Left colon (tissue), 2 donors: ENCODE measurements at regions of chr2 and their contacts with region 1.

Region 1: DNA sequence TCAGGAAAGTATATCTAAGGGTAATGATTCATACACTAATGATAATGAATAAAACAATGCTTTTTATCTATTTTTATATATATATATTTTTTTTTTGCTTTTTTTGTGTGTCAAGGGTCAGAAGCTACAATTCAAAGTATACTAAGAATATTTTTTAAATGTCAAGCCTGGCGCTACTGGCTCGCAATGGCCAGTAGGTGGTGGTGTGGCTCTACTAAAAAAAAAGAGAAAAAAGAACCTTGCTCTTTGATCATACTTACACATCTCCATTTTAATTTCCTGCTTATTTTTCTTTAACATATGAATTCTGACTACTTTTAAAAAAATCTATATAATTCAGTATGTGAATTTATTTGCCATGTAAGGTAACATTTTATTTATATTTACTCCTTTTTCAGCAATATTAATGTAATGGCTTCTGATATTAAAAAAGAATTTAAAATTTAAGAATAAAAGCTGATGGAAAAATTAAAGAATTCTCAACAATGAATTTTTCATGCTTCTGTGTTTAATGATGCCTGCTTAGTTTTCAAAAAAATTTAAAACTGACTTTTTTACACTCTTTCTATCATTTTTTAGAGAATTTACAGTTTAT is 232.9 kb downstream of the GULP1 start:
- DNase-seq: peak in 1 of 2 donors; percentile 16
- ATAC-seq: peak; percentile 63

Region 2: GRCh38 chr2:187475499-187476248 is 1048.9 kb before region 1 on chr2:
- intact Hi-C with region 1: no loop called
- DNase-seq: no peak
- ATAC-seq: no peak

Region 3: DNA sequence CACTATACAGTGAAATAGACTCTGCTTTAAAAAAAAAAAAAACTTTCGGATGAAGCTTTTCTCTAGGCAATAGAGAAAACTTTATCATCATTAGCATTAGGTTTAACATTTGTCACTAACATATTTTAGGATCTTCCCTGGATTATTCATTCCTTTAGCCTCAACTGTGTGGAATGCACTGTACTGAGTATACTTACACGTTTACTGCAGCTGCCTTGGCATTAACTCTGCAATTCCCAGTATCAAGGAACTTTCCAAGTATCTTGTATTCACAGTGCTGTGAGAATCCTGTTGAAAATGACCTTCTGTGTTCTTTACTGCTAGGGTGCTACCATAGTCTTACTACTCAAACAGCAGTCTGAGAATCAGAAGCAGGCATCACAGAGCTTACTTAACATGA is 121.4 kb after region 1 on chr2:
- intact Hi-C with region 1: no loop called
- DNase-seq: no peak
- ATAC-seq: no peak

Region 4: DNA sequence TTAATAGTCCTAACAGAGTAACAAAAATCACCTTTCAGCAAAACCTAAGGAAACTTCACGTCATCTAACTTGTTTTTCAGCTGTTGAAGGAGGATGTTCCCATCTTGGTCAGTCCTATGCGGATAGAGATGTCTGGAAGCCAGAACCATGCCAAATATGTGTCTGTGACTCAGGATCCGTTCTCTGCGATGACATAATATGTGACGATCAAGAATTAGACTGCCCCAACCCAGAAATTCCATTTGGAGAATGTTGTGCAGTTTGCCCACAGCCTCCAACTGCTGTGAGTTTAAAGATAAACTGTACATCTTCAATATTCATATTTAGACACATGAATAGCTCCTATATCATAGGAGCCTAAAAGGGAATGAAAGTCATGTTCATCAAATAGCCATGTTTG is 460.1 kb after region 1 on chr2:
- intact Hi-C with region 1: loop called in 1 of 2 experiments (anchors 5 kb)
- DNase-seq: no peak
- ATAC-seq: no peak

Region 5: GRCh38 chr2:189412330-189412953 is 887.8 kb after region 1 on chr2:
- intact Hi-C with region 1: loop called in 1 of 2 experiments (anchors 5 kb)
- DNase-seq: no peak
- ATAC-seq: peak; percentile 41